Activated B cell treated with CpG ODN at 0.5 μM for 24 hours (primary cell): ENCODE measurements at regions of chr19 and their contacts with region 1.

Region 1: GRCh38 chr19:1094975-1095701 is at the start of gene POLR2E:
- DNase-seq: peak; percentile 98
- ATAC-seq: peak; percentile 98
- H3K4me3 Mint-ChIP-seq: peak within 1 kb of the TSS; percentile 90
- H3K27ac Mint-ChIP-seq: peak within 1 kb of the TSS; percentile 84
- H3K4me1 Mint-ChIP-seq: peaks cover 45% of the 10 kb centered on the region
- H3K27me3 Mint-ChIP-seq: no peaks in the 10 kb centered on the region
- CTCF ChIP-seq: no peak
- total RNA-seq, gene POLR2E: 173 and 184 TPM in 2 replicates

Region 2: DNA sequence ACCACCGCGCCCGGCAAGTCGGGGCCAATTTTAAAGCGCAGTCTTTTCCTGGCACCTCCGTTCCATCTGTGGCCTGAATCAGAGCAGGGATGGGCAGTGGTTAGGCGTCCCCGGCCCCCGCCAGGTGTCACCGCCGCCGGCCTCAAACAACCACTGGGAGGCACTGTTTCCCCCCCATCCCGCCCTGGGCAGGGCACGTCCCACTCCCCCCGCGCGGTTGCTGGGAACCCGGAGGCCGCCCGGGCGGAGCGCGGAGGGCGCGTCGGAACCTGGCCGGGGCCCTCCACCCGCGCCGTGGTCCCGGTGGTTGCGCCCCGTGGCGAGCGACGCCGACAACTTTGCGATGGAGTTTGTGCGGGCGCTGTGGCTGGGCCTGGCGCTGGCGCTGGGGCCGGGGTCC is 95.0 kb before region 1 on chr19 and contains the start of gene GRIN3B:
- CTCF ChIA-PET with region 1: no interaction called
- POLR2A ChIA-PET with region 1: no interaction called
- intact Hi-C with region 1: no loop called
- DNase-seq: peak; percentile 48
- ATAC-seq: peak; percentile 43
- H3K4me3 Mint-ChIP-seq: peak within 1 kb of the TSS; percentile 46
- H3K27ac Mint-ChIP-seq: no peak within 1 kb of the TSS
- H3K4me1 Mint-ChIP-seq: peaks cover 20% of the 10 kb centered on the region
- H3K27me3 Mint-ChIP-seq: peaks cover 33% of the 10 kb centered on the region
- CTCF ChIP-seq: no peak
- total RNA-seq, gene GRIN3B: 0.11 TPM in 1 of 2 replicates, not detected in the other

Region 3: GRCh38 chr19:1082172-1082927 is 12.8 kb before region 1 on chr19:
- CTCF ChIA-PET with region 1: no interaction called
- POLR2A ChIA-PET with region 1: interaction called, 184 read pairs
- intact Hi-C with region 1: no loop called
- DNase-seq: no peak
- ATAC-seq: peak; percentile 63
- H3K4me3 Mint-ChIP-seq: no peak overlapping the region
- H3K27ac Mint-ChIP-seq: peak overlapping the region; percentile 65
- H3K4me1 Mint-ChIP-seq: peaks cover 52% of the 10 kb centered on the region
- H3K27me3 Mint-ChIP-seq: no peaks in the 10 kb centered on the region
- CTCF ChIP-seq: no peak

Region 4: GRCh38 chr19:1324806-1325567 is 229.8 kb after region 1 on chr19:
- CTCF ChIA-PET with region 1: no interaction called
- POLR2A ChIA-PET with region 1: no interaction called
- intact Hi-C with region 1: no loop called
- DNase-seq: no peak
- ATAC-seq: peak; percentile 40
- H3K4me3 Mint-ChIP-seq: no peak overlapping the region
- H3K27ac Mint-ChIP-seq: no peak overlapping the region
- H3K4me1 Mint-ChIP-seq: peaks cover 4% of the 10 kb centered on the region
- H3K27me3 Mint-ChIP-seq: peaks cover 32% of the 10 kb centered on the region
- CTCF ChIP-seq: no peak